ENCODE measurements at regions of chr7 and their contacts with region 1.

Region 1: GRCh38 chr7:99001482-99002145 is 123.3 kb downstream of the TRRAP start:
- DNase-seq: no peak
- ATAC-seq: peak; percentile 71
- H3K4me3 Mint-ChIP-seq: peak overlapping the region; percentile 62
- H3K27ac Mint-ChIP-seq: peak overlapping the region; percentile 82
- H3K4me1 Mint-ChIP-seq: peaks cover 20% of the 10 kb centered on the region
- H3K27me3 Mint-ChIP-seq: no peaks in the 10 kb centered on the region

Region 2: GRCh38 chr7:98988641-98989040 is 13.0 kb before region 1 on chr7:
- POLR2A ChIA-PET with region 1: interaction called, 11 read pairs
- DNase-seq: no peak
- ATAC-seq: no peak
- H3K4me3 Mint-ChIP-seq: peak overlapping the region; percentile 33
- H3K27ac Mint-ChIP-seq: peak overlapping the region; percentile 78
- H3K4me1 Mint-ChIP-seq: peaks cover 30% of the 10 kb centered on the region
- H3K27me3 Mint-ChIP-seq: no peaks in the 10 kb centered on the region

Region 3: DNA sequence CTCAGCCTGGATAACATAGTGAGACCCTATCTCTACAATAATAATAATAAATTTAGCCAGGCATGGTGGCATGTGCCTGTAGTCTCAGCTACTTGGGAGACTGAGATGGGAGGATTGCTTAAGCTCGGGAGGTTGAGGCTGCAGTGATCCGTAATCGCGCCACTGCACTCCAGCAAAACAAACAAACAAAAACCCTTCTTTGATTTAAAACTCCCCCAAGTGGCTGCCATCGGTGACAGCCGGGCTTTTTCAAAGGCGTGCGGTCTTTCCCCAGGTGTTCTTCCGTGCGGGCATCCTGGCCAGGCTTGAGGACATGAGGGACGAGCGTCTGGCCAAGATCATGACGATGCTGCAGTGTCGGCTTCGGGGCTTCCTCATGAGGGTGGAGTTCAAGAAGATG is 269.1 kb after region 1 on chr7:
- POLR2A ChIA-PET with region 1: no interaction called
- DNase-seq: no peak
- ATAC-seq: no peak
- H3K4me3 Mint-ChIP-seq: no peak overlapping the region
- H3K27ac Mint-ChIP-seq: no peak overlapping the region
- H3K4me1 Mint-ChIP-seq: peaks cover 12% of the 10 kb centered on the region
- H3K27me3 Mint-ChIP-seq: peaks cover 8% of the 10 kb centered on the region